ENCODE measurements at regions of chr12 and their contacts with region 1.

Region 1: GRCh38 chr12:57904848-57905811 is 36.2 kb upstream of the ATP23 start:
- DNase-seq: peak; percentile 88
- H3K4me3 Mint-ChIP-seq: no peak overlapping the region
- H3K27ac Mint-ChIP-seq: no peak overlapping the region
- H3K4me1 Mint-ChIP-seq: peaks cover 6% of the 10 kb centered on the region
- H3K27me3 Mint-ChIP-seq: peaks cover 39% of the 10 kb centered on the region

Region 2: GRCh38 chr12:57765042-57765697 is 140.0 kb before region 1 on chr12:
- CTCF ChIA-PET with region 1: interaction called, 26 read pairs
- DNase-seq: peak; percentile 71
- H3K4me3 Mint-ChIP-seq: peak overlapping the region; percentile 75
- H3K27ac Mint-ChIP-seq: no peak overlapping the region
- H3K4me1 Mint-ChIP-seq: peaks cover 36% of the 10 kb centered on the region
- H3K27me3 Mint-ChIP-seq: peaks cover 48% of the 10 kb centered on the region

Region 3: DNA sequence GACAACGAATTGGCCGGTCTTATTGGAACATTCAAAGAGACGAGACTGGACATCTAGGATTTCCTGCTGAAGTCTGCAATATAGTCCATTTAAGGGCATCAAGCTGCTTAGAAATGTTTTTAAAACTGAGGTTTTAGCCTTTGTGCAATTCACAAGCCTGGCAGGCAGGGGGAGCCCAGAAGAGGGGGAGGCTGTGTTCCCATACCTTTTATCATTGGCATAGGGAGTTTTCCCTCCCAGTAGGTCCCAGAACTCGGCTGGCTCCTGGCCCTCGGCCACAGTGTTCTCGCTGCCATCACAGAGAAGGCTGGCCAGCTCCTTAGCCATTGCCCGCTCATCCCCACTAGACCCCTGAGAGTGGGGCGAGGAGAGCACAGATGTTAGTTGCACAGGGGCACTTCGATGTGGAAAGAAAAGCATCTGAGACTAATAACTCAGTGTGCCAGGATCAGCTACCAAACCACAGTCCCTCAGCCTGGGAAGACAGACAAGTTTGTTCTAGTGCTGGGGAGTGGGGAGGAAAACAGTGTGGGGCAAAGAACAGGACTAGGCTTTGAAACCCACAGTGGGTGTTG is 101.7 kb before region 1 on chr12:
- CTCF ChIA-PET with region 1: interaction called, 147 read pairs
- DNase-seq: peak; percentile 60
- H3K4me3 Mint-ChIP-seq: no peak overlapping the region
- H3K27ac Mint-ChIP-seq: no peak overlapping the region
- H3K4me1 Mint-ChIP-seq: no peaks in the 10 kb centered on the region
- H3K27me3 Mint-ChIP-seq: no peaks in the 10 kb centered on the region

Region 4: GRCh38 chr12:57836442-57837375 is 68.4 kb before region 1 on chr12:
- CTCF ChIA-PET with region 1: interaction called, 107 read pairs
- DNase-seq: peak; percentile 71
- H3K4me3 Mint-ChIP-seq: peak overlapping the region; percentile 46
- H3K27ac Mint-ChIP-seq: peak overlapping the region; percentile 86
- H3K4me1 Mint-ChIP-seq: peaks cover 92% of the 10 kb centered on the region
- H3K27me3 Mint-ChIP-seq: no peaks in the 10 kb centered on the region

Region 5: GRCh38 chr12:57888409-57889157 is 16.5 kb before region 1 on chr12:
- CTCF ChIA-PET with region 1: interaction called, 30 read pairs
- DNase-seq: peak; percentile 54
- H3K4me3 Mint-ChIP-seq: no peak overlapping the region
- H3K27ac Mint-ChIP-seq: no peak overlapping the region
- H3K4me1 Mint-ChIP-seq: peaks cover 20% of the 10 kb centered on the region
- H3K27me3 Mint-ChIP-seq: peaks cover 23% of the 10 kb centered on the region